ENCODE measurements at regions of chr4 and their contacts with region 1.

Region 1: DNA sequence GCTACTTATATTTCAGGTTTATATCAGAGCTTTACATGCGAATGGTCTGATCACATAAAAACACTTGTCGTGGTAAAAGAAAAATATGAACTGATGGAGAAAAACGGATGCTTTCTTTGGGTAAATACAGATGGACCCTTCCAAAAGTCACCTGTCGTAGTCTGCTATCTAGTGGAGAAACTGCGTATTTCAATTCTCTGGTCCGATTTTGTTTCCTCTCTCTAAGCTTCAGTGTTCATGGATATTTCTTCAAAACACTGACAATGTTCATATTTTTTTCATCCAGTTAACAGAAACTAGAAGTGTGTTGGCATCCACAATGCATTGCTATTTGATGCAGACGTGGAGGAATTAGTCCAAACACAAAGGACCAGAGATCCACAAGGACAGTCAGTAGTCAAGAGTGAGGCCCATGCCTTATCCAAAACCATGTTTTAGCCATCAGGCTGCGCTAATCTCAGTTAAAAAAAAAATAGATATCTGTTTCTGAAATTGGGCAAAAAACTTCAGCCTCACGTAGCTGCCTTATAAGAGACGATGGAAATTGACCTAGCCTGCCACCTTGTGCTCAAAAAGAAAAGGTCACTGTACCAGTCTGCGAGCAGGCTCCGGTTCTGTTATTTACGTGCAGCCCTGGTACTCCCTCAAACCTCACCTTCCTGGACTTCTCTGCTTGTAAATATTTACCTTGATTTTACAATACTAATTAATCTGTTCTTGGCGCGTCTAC is 16.0 kb downstream of the MEPE start:
- DNase-seq: peak; percentile 15 to 50
- ATAC-seq: peak; percentile 96 to 98
- H3K4me3 ChIP-seq: peak overlapping the region; percentile 37
- H3K27ac ChIP-seq: peak overlapping the region in 1 of 2 experiments; percentile 48; a peak in 1 of 6 replicates
- H3K4me1 ChIP-seq: peaks cover 13% of the 10 kb centered on the region; the same call in 1 of the 3 replicates
- CTCF ChIP-seq: peak; percentile 60
- EP300 ChIP-seq: no peak
- POLR2A ChIP-seq: no peak
- RAD21 ChIP-seq: peak; percentile 51 to 55

Region 2: DNA sequence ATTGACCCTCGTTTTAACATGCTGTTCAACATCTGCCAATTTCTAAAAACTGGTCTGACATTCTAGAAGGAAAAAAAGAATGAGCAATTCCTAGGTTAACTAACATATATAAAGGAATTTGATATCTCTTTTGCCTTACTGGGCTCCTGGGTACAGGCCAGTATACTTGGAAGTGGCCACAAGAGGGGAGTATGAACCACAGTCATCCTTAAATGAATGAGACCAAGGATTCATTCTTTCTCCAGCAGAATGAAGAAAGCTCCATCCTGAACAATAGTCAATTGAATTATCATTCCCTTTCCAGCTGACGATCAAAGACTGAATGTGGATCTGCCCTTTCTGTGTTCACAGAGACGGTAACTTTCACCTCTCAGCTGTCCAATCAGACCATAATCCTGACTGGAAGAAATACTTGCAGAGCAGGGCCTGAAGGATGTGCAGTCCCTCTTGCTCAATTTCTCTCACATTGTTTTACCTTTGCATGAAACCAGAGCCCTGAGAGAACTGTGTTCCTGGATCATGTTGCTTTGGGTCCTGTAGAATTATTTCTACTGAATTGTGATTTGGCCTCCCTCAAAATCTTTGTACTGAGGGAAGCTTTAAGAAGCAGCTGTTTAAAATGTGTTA is 304.8 kb before region 1 on chr4:
- CTCF ChIA-PET with region 1: interaction called, 26 read pairs
- POLR2A ChIA-PET with region 1: no interaction called
- DNase-seq: peak; percentile 25 to 48
- ATAC-seq: peak; percentile 91 to 92; a peak in 5 of 6 replicates
- H3K4me3 ChIP-seq: no peak overlapping the region
- H3K27ac ChIP-seq: no peak overlapping the region
- H3K4me1 ChIP-seq: no peaks in the 10 kb centered on the region
- CTCF ChIP-seq: peak; percentile 60
- EP300 ChIP-seq: no peak
- POLR2A ChIP-seq: no peak
- RAD21 ChIP-seq: peak; percentile 65 to 66

Region 3: GRCh38 chr4:87679449-87680169 is 169.2 kb before region 1 on chr4:
- CTCF ChIA-PET with region 1: interaction called, 16 read pairs
- POLR2A ChIA-PET with region 1: no interaction called
- DNase-seq: peak; percentile 8 to 46
- ATAC-seq: peak in 1 of 2 experiments; percentile 62; a peak in 3 of 6 replicates
- H3K4me3 ChIP-seq: no peak overlapping the region
- H3K27ac ChIP-seq: no peak overlapping the region
- H3K4me1 ChIP-seq: no peaks in the 10 kb centered on the region
- CTCF ChIP-seq: peak; percentile 71
- EP300 ChIP-seq: no peak
- POLR2A ChIP-seq: no peak
- RAD21 ChIP-seq: peak; percentile 77 to 79

Region 4: GRCh38 chr4:87865288-87865687 is 16.5 kb after region 1 on chr4:
- CTCF ChIA-PET with region 1: interaction called, 19 read pairs
- POLR2A ChIA-PET with region 1: no interaction called
- DNase-seq: peak in 1 of 2 experiments; percentile 13
- ATAC-seq: no peak
- H3K4me3 ChIP-seq: no peak overlapping the region
- H3K27ac ChIP-seq: peak overlapping the region; percentile 63 to 72; a peak in 3 of 6 replicates
- H3K4me1 ChIP-seq: peaks cover 13% of the 10 kb centered on the region
- CTCF ChIP-seq: no peak
- EP300 ChIP-seq: no peak
- POLR2A ChIP-seq: no peak
- RAD21 ChIP-seq: no peak

Region 5: DNA sequence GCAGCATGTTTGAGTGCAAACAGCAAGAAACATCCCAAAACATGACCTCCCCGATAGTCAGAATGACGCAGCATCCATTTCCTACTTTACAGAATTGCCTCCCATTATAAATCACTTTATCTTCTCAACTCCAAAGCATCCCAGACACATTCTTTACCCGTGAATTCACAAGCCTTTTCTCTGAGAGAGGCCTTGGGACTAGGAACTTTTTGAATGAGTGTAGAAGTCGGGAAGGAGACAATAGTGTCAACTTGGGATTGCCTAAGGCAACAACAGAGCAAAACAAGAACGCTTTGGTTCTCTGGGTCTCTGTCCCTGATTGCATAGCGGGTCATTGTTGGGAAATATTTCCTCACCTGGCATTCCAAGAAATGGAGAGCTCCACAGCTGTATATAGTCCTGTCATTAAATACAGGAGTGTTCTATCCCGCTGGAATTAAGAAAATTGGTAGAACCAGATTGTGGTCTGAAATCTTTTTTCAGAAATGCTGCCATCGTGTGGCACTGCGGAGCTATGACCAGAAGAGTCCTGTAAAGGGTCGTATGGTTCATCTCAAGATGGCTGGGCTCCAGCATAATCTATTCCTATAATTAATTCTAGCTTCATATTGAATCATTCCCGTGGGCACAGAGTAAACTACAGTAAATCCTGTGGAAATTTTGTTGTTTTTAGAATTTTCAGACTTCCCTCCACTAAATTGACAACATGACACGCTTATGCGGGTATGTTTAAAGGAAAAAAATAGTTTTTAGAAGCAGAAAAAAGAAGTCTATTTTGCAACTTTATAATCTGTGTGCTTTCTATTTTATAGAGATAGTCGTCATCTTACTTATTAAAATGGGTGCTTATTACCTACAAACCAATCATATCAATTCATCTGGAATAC is 124.7 kb after region 1 on chr4:
- CTCF ChIA-PET with region 1: interaction called, 142 read pairs
- POLR2A ChIA-PET with region 1: interaction called, 8 read pairs
- DNase-seq: peak; percentile 13 to 70
- ATAC-seq: peak; percentile 72 to 74
- H3K4me3 ChIP-seq: peak overlapping the region; percentile 30
- H3K27ac ChIP-seq: peak overlapping the region; percentile 76
- H3K4me1 ChIP-seq: peaks cover 28% of the 10 kb centered on the region
- CTCF ChIP-seq: peak; percentile 69
- EP300 ChIP-seq: no peak
- POLR2A ChIP-seq: no peak
- RAD21 ChIP-seq: peak; percentile 59 to 67

Region 6: GRCh38 chr4:87985097-87985886 is 136.5 kb after region 1 on chr4:
- CTCF ChIA-PET with region 1: interaction called, 142 read pairs
- POLR2A ChIA-PET with region 1: no interaction called
- DNase-seq: peak; percentile 44 to 74
- ATAC-seq: peak; percentile 100
- H3K4me3 ChIP-seq: no peak overlapping the region
- H3K27ac ChIP-seq: peak overlapping the region; percentile 21 to 73; a peak in 3 of 6 replicates
- H3K4me1 ChIP-seq: peaks cover 6% of the 10 kb centered on the region; the same call in 1 of the 3 replicates
- CTCF ChIP-seq: peak; percentile 73
- EP300 ChIP-seq: no peak
- POLR2A ChIP-seq: no peak
- RAD21 ChIP-seq: peak; percentile 78

Region 7: DNA sequence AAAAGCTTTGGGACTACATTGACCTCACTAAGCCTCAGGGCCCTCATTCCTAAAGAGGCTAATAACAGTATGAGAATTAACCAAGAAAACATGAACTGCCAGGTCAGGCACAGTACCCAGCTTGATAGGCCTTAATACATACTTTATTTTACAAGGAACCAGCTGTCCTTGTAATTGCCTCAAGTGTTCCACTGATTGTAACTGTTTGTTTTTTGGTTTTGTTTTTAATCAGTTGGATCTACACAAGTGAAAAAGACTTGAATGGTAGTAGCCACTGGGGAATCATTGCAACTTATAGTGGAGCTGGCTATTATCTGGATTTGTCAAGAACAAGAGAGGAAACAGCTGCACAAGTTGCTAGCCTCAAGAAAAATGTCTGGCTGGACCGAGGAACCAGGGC is 194.2 kb after region 1 on chr4:
- CTCF ChIA-PET with region 1: no interaction called
- POLR2A ChIA-PET with region 1: no interaction called
- DNase-seq: no peak
- ATAC-seq: no peak
- H3K4me3 ChIP-seq: no peak overlapping the region
- H3K27ac ChIP-seq: no peak overlapping the region
- H3K4me1 ChIP-seq: no peaks in the 10 kb centered on the region
- CTCF ChIP-seq: no peak
- EP300 ChIP-seq: no peak
- POLR2A ChIP-seq: no peak
- RAD21 ChIP-seq: no peak